ENCODE measurements at regions of chr1 and their contacts with region 1.

Region 1: GRCh38 chr1:18902523-18903290 is at the start of gene ALDH4A1:
- DNase-seq: peak; percentile 99
- CTCF ChIP-seq: no peak

Region 2: GRCh38 chr1:18890711-18891425 is 11.8 kb before region 1 on chr1:
- CTCF ChIA-PET with region 1: interaction called, 89 read pairs
- POLR2A ChIA-PET with region 1: no interaction called
- DNase-seq: no peak
- CTCF ChIP-seq: no peak

Region 3: DNA sequence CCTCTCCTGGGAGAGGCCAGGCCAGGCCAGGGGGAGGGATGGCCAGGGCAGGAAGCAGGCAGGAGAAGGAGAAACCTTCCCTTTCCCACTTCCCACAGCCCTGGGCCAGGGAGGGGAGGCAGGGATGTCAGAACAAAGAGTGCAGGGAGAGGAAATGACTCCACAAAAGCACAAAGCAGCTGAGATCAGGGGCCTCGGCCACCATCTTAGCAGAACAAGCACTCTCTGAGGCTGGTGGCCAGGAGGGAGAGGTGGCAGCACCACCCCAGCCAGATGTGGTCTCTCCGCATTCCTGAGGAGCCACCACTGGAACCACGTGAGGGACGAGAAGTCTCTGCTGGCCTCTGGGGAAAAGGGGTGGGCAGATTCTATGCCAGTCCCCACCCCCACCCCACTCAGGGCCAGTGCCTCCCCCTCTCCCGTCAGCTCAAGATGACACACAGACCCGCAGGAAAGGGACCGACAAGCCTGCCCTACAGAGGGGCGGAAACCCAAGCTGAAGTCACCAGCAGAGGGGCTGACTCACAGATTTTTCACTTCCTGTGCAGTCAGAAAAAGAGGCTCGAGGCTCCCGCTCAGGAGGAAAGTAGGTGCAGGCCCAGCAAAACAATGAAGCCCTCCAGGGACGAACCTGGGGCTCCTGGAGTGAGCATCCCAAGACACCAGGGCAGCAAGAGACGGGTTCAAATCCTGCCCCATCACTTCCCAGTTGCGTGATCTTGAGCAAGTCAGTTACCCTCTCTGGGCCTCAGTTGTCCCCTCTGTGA is 23.8 kb after region 1 on chr1:
- CTCF ChIA-PET with region 1: interaction called, 48 read pairs
- POLR2A ChIA-PET with region 1: no interaction called
- DNase-seq: peak; percentile 93
- CTCF ChIP-seq: no peak

Region 4: DNA sequence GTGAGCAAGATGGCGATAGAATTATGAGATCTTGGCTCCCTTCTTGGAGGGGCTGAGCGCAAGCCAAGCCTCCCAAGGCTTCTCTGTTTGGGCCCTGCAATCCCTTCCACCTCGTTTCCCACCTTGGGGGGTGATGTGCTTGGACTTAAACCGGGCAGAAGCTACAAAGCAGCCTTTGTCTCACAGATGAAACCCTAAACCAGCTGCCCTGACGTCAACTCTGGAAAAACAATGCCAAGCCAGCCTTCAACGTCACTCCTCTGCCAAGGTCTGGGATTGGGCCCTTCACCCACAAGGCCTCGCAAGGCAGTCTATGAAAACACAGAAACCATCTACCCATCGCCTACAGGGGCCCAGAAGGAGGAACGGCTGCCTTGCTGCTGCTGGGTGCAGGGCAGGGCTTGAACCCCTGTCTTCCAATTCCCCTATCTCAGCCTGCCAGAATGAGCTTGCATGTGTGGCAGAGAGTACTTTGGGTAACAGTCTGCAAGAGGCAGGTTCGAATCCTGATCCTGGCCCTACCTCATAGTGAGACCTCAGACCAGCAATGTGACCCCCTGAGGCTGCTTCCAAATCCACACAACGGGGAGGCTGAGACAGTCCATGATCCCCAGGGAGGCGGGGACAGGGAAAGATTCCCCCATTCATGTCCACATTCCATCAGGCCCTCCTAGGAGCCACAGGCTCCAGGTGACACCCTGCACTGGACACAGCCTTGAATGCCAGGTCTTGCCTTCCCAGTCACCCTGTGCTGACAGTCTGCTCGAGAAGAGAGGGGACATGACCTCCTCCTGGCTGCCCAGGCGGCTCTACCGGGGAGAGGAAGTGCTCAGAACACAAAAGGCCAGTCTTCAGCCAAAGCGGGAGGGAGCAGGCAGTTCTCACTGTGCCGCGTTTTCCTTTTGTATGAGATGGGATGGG is 38.8 kb after region 1 on chr1:
- CTCF ChIA-PET with region 1: interaction called, 12 read pairs
- POLR2A ChIA-PET with region 1: no interaction called
- DNase-seq: no peak
- CTCF ChIP-seq: no peak

Region 5: DNA sequence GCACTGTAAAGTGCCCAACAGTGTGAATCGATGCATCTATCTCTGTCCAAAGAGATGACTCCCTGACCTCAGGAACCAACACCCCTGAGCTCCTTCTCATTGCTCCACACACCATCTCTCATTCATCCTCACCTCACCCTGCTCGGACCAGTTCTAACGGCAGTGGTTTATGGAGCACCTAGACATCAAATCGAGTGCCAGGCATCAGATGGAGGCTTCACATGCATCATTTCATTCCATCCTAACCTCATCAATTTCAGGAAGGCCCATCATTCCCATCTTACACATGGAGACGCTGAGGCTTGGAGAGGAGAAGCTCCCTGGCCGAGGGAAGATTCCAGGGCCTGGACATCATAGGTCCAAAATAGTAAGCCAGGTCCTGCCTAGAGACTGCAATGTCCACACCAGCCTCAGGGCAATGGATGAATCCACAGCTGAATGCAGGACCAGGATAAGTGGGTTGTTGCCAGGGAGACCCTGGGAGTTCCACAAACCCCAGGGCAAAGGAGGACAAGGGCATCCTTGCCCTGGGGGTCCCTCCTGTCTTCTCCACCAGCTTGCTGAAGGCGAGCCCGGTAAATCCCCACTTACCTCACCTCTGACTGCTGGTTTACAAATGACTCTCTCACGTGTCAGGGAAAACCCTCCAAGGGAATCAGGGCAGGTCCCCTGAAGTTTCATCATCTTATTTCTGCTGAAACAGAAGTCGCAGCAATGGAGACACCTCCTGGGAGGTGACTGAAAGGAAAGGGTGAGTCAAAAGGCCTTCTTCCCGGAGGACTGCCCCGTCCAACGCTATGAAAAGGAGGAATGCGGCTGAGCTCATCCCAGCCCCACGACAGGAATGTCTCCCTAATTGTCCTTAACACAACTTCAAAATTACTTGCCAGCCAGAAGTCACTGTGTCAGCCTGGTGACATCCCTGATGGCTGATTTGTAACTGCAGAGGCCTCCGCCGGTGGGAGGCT is 62.8 kb after region 1 on chr1:
- CTCF ChIA-PET with region 1: interaction called, 17 read pairs
- POLR2A ChIA-PET with region 1: no interaction called
- DNase-seq: peak; percentile 48
- CTCF ChIP-seq: no peak

Region 6: DNA sequence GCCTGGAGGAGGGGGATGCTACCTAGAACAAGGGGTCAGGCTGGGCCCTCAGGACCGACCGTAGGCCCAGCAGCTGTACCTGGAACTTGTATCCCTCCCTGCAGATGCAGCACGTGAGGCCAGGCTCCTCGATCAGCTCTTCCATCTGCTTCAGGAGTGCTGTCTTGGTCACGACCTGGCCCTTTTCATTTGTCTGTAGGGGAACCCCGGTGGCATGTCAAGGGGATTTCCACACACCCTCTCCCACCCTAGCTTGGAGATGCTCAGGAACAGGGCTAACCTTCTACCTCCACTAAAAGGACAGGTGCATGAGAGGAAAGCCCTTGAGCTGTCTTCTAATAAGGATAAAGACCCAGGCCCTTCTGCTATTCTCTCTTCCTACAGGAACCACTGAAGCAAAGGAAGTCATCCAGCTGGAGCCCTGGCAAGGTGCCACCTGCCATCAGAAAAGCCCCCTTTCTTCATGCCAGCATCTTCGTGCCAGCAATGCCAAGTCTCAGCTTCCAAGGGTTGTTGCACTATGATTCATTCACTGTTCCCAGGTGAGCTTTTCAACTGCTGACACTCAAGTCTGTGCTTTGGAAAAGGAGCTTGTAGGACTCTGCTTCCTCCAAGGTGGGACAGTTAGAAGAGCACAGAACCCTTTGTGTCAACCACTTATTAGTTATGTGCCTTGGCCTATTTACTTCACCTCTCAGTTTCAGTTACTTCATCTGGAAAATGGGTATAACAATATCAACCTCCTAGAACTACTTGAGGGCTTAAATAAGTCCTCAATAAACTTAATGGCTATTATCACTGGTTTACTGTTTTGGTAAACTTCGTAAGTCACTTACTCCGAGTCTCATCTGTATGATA is 185.3 kb after region 1 on chr1:
- CTCF ChIA-PET with region 1: interaction called, 29 read pairs
- POLR2A ChIA-PET with region 1: no interaction called
- DNase-seq: peak; percentile 55
- CTCF ChIP-seq: no peak